Right ventricle myocardium inferior (tissue), 1 donor: ENCODE measurements at regions of chr3 and their contacts with region 1.

Region 1: GRCh38 chr3:98732286-98733052 is 30.7 kb upstream of the ST3GAL6 start:
- DNase-seq: peak; percentile 86
- ATAC-seq: peak; percentile 84

Region 2: GRCh38 chr3:98602078-98602678 is 130.3 kb before region 1 on chr3:
- intact Hi-C with region 1: loop called (anchors 5 kb)
- DNase-seq: no peak
- ATAC-seq: peak; percentile 59

Region 3: DNA sequence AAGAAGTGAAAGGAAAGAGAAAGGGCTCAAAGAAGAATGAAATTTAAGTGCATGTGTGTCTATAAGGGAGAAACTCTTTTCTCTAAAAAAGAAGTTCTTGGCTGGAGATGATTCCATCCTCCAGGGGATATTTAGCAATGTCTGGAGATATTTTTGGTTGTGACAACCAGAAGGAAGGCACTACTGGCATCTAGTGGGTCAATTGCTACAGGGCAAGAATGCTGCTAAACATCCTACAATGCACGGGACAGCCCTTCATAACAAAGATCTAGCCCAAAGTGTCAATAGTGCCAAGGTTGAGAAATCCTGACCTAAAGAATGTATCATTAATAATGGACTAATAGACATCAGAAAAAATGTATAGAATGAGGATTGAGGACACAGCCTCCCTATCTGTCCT is 26.8 kb before region 1 on chr3:
- intact Hi-C with region 1: loop called (anchors 2 kb)
- DNase-seq: no peak
- ATAC-seq: no peak

Region 4: DNA sequence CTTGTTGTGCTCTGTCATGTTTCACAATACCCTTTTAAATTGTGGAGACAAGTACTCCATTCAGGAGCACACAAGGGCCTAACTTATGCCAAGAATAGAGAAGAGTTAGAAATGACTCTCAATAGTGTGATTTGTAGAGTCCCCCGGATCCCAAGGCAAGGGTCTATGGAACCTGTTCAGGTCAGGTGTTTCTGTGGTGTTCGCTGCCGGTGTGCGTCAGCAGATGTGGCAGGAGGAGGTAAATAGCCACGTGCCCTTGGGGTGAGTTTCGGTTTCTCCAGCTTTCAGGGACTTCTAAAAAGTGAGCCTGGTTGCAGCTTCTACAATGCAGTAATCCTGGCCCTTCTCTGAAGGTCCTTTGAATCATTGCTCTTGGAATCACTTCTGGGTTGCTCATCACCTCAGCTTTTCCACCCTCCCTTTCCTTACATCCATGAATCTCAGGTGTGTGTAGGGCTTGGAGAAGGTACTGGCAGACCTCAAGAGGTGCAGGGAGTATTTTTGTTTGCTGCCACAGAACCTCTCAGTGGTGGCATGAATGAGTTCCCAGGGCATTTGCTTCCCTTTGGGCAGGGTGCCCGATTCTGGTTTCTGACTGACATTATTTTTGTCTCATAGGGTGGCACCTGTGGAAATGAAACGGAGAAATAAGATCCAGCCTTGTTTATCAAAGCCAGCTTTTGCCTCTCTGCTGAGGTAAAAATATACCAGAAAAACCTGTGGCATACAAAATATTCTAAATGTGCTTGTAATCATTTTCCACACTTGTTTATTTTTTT is 38.0 kb after region 1 on chr3:
- intact Hi-C with region 1: loop called (anchors 2 kb)
- DNase-seq: no peak
- ATAC-seq: peak; percentile 44

Region 5: GRCh38 chr3:98784666-98785600 is 52.5 kb after region 1 on chr3:
- intact Hi-C with region 1: loop called (anchors 5 kb)
- DNase-seq: no peak
- ATAC-seq: peak; percentile 77

Region 6: GRCh38 chr3:99236576-99236975 is 504.1 kb after region 1 on chr3:
- intact Hi-C with region 1: no loop called
- DNase-seq: no peak
- ATAC-seq: no peak